Gastrocnemius medialis (tissue), 4 donors: ENCODE measurements at regions of chr15 and their contacts with region 1.

Region 1: DNA sequence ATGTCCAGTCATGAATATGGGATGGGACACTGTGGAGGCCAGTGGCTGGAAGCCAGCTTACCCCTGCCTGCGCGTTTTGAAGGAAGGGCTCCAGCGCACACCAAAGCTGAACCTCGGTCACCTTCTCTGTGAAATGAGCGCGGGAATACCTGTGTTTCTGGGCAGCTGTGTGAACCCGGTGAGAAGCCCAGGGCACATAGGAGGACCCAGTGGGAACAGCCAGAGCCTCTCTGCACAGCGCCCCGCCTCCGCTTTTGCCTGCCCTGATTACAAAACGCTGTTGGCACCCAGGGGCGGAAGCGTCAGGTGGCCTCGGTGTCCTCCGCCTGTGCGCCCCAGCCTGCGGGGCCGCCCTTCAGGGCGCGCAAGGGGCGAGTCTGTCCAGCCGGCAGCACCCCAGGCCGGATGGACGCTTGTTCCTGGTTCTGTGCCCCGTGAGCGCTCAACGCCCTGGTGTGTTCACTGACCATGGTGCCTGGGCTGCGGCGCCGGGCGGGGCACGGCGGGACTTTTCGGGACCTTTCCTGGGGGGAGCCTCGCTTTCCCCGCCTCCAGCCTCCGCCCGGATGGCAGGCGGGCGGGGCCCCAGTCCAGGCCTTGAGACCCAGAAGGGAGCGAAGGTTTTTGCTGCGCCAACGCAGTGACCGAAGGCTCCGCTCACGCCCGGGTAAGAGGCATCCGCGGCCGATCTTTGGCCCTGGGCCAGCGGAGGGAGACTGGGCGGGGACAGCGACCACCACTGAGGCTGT is at the start of gene SQOR:
- DNase-seq: peak; percentile 85 to 95
- ATAC-seq: peak; percentile 78 to 81
- H3K4me3 ChIP-seq: peak within 1 kb of the TSS; percentile 84 to 95 (median 88)
- H3K27ac ChIP-seq: peak within 1 kb of the TSS; percentile 98 to 99 (median 98)
- H3K4me1 ChIP-seq: peaks cover 34 to 35% of the 10 kb centered on the region in 2 donors
- H3K27me3 ChIP-seq: no peaks in the 10 kb centered on the region
- CTCF ChIP-seq: no peak
- POLR2A ChIP-seq: peak; percentile 91 to 93
- total RNA-seq, gene SQOR: 140 to 194 (median 164) TPM

Region 2: GRCh38 chr15:43791993-43792760 is 1842.4 kb before region 1 on chr15 and contains the start of gene SERF2:
- in situ Hi-C with region 1: loop called in 1 of 4 experiments (anchors 25 kb)
- intact Hi-C with region 1: no loop called
- DNase-seq: peak; percentile 100
- ATAC-seq: peak; percentile 83 to 91
- H3K4me3 ChIP-seq: peak within 1 kb of the TSS; percentile 91 to 100 (median 94)
- H3K27ac ChIP-seq: peak within 1 kb of the TSS; percentile 96 to 100 (median 99)
- H3K4me1 ChIP-seq: peaks cover 40 to 46% of the 10 kb centered on the region in 2 donors
- H3K27me3 ChIP-seq: no peaks in the 10 kb centered on the region
- CTCF ChIP-seq: no peak
- POLR2A ChIP-seq: peak; percentile 99
- total RNA-seq, gene SERF2: 491 to 646 (median 617) TPM

Region 3: DNA sequence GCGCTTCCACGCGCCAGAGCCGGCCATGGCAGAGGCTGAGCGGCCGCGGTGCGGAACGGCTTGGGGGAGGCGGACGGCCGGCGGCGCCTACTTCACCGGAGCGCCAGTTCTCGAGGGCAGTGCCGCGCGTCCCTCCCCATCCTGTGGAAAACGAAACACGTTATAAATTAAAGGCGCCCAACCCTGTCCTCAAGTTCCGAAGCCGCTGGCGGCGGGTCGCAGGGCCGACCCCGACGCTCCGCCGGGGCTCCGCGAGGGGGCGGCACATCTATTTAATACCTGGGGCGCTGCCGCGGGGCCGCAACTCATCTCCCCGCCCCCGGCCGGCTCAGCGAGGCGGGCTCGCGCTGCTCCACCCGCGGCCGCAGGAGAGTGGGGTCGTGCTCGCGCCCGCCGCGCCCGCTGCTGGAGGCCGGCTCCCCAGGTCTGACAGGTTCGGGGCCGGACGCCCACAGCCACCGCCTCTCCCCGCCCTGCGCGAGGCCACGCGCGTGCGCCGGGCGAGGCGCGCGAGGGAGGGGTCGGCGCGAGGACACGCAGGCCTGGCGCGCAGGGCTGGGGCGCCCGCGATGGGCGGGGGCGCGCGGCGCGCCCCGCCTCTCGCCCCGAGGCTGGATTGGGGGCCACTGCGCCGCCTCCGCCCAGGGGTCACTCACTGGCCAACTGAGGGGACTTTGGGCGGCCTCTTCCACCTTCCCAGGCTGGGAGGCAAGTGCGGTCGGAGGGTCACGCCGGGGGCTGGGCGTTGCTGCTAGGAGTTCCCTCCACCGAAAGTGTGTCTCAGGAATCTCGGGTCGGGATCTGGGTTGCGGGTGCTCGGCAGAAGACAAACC is 112.1 kb before region 1 on chr15 and contains the start of gene SLC30A4:
- in situ Hi-C with region 1: no loop called
- intact Hi-C with region 1: no loop called
- DNase-seq: peak; percentile 20 to 46
- ATAC-seq: peak; percentile 87 to 88
- H3K4me3 ChIP-seq: peak within 1 kb of the TSS; percentile 69 to 86 (median 78)
- H3K27ac ChIP-seq: peak within 1 kb of the TSS; percentile 78 to 81 (median 80)
- H3K4me1 ChIP-seq: peaks cover 14 to 17% of the 10 kb centered on the region in 2 donors
- H3K27me3 ChIP-seq: no peaks in the 10 kb centered on the region
- CTCF ChIP-seq: peak in 4 of 5 experiments; percentile 6 to 54 (median 46)
- POLR2A ChIP-seq: peak; percentile 57 to 62
- total RNA-seq, gene SLC30A4: 1.4 to 2.3 (median 1.7) TPM

Region 4: DNA sequence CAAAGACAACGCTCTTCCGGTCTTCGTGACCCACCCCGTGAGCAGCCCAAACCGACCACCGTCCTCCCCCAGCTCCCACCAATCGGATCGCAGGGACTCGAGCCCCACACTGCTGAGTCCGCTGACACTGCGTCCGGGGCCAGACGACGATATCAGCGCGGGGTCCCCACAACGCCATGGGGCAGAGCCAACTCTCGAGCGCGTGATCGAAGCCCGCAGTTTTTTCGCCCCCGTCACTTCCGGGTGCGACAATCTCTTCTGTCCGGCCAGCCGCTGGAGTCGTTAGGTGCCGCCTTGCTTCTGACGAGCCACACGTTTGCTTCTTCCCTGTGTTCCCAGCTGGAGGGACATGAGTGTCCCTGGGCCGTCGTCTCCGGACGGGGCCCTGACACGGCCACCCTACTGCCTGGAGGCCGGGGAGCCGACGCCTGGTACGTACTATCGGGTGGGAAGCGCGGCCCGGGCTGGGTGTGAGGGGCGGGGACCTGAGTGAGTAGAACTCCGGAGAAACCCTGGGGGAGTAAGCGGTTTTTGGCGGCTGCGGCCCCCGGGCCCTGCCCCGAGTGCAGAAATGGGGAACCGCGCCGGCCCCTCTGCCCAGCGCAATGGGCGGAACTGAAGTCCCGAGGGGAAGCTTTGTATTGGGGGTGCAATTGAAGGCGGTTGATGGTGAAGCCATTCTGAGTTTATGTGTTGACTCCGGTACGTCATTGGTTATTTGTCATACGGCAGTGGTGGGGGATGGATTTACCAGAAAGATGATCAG is 47.3 kb before region 1 on chr15 and contains the start of gene BLOC1S6:
- in situ Hi-C with region 1: loop called in 1 of 4 experiments (anchors 5 kb)
- intact Hi-C with region 1: loop called (anchors 2 kb)
- DNase-seq: peak; percentile 78 to 82
- ATAC-seq: peak; percentile 96
- H3K4me3 ChIP-seq: peak within 1 kb of the TSS; percentile 87 to 98 (median 92)
- H3K27ac ChIP-seq: peak within 1 kb of the TSS; percentile 95 to 100 (median 97)
- H3K4me1 ChIP-seq: peaks cover 33 to 37% of the 10 kb centered on the region in 2 donors
- H3K27me3 ChIP-seq: no peaks in the 10 kb centered on the region
- CTCF ChIP-seq: peak in 1 of 5 experiments; percentile 15
- POLR2A ChIP-seq: peak; percentile 68 to 72
- total RNA-seq, gene BLOC1S6: 32.9 to 38.2 (median 36.6) TPM

Region 5: GRCh38 chr15:45660231-45660979 is 25.8 kb after region 1 on chr15:
- in situ Hi-C with region 1: no loop called
- intact Hi-C with region 1: loop called (anchors 2 kb)
- DNase-seq: peak; percentile 51 to 66
- ATAC-seq: peak; percentile 90 to 94
- H3K4me3 ChIP-seq: no peak overlapping the region
- H3K27ac ChIP-seq: peak overlapping the region; percentile 78 to 81 (median 80)
- H3K4me1 ChIP-seq: peaks cover 32 to 47% of the 10 kb centered on the region in 2 donors
- H3K27me3 ChIP-seq: no peaks in the 10 kb centered on the region
- CTCF ChIP-seq: peak in 2 of 5 experiments; percentile 10 to 29
- POLR2A ChIP-seq: no peak